ENCODE measurements at regions of chr16 and their contacts with region 1.

Region 1: DNA sequence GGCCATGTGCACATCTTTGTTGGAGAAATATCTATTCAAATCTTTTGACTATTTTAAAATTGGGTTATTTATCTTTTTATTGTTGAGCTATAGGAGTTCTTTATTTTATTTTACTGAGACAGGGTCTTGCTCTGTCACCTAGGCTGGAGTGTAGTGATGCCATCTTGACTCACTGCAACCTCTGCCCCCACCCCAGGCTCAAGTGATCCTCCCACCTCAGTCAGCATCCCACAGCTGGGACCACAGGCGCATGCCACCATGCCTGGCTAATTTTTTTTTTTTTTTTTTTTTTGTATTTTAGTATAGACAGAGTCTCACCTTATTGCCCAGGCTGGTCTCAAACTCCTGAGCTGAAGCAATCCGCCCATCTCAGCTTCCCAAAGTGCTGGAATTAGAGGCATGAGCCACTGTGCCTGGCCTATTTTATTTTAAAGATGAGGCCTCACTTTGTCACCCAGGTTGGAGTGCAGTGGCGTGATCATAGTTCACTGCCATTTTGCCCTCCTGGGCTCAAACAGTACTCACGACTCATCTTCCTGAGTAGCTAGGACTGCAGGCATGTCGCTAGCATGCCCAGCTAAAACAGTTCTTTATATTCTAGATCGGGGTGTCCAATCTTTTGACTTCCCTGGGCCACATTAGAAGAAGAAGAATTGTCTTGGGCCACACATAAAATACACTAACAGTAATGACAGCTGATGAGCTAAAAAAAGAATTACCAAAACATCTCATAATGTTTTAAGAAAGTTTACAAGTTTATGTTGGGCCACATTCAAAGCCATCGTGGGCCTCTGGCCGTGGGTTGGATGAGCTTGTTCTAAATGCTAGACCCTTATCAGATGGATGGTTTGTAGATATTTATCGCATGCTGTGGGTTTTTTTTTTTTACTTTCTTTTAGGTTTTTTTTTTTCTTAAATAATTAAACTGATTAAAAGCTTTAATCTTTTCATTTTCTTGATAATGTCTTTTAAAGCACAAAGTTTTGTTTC is 13.7 kb downstream of the TENT4B start:
- DNase-seq: no peak
- ATAC-seq: no peak
- H3K4me3 ChIP-seq: peak overlapping the region; percentile 15; the same call in 1 of the 2 replicates
- H3K27ac ChIP-seq: peak overlapping the region; percentile 9; the same call in 1 of the 2 replicates
- H3K4me1 ChIP-seq: peaks cover 6% of the 10 kb centered on the region; the same call in 1 of the 2 replicates
- H3K27me3 ChIP-seq: no peaks in the 10 kb centered on the region
- CTCF ChIP-seq: no peak
- EP300 ChIP-seq: no peak
- POLR2A ChIP-seq: no peak
- RAD21 ChIP-seq: no peak

Region 2: GRCh38 chr16:50195276-50195675 is 28.5 kb after region 1 on chr16:
- CTCF ChIA-PET with region 1: interaction called, 6 read pairs
- POLR2A ChIA-PET with region 1: interaction called, 10 read pairs
- RAD21 ChIA-PET with region 1: no interaction called
- SMC1A ChIA-PET with region 1: interaction called, 6 read pairs
- in situ Hi-C with region 1: no loop called
- intact Hi-C with region 1: no loop called
- DNase-seq: no peak
- ATAC-seq: peak; percentile 12
- H3K4me3 ChIP-seq: peak overlapping the region; percentile 43; the same call in 1 of the 2 replicates
- H3K27ac ChIP-seq: peak overlapping the region; percentile 75
- H3K4me1 ChIP-seq: peaks cover 42% of the 10 kb centered on the region
- H3K27me3 ChIP-seq: no peaks in the 10 kb centered on the region
- CTCF ChIP-seq: no peak
- EP300 ChIP-seq: no peak
- POLR2A ChIP-seq: no peak
- RAD21 ChIP-seq: no peak

Region 3: DNA sequence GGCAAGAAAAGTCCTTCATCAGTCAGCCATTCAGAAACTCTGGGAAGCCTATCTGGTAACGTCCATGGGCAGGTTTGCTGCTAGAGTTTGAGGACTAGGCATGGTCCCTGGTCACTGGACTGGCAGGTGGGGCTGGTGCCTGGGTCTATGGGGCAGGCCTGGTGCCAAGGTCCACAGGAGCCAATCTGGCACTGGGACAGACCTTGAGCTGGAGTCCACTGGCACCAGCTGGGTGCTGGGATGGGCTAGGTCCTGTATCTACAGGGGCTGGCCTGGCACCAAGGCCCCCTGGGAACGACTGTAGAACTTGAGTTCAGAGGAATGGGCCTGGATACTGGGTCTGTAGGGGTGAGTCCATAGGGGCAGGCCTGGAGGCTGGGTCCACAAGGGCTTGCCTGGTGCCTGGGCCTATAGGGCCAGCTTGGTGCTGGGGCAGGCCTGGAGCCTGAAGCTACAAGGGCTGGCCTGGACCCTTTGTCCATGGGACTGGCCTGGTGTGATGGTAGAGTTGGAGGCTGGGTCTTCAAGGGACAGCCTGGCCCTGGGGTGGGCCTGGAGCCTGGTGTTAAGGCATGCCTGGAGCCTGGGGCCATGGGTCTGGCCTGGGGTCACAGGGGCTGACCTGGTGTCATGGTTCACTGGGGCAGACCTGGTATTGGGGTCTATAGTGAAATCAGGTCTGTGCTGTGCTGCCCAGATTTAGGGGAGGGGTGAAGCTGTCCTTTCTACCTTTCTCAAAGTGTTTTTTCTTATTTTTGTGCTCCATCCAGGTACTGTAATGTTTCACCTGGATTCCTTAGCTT is 350.8 kb after region 1 on chr16:
- CTCF ChIA-PET with region 1: no interaction called
- POLR2A ChIA-PET with region 1: no interaction called
- RAD21 ChIA-PET with region 1: no interaction called
- SMC1A ChIA-PET with region 1: no interaction called
- in situ Hi-C with region 1: no loop called
- intact Hi-C with region 1: no loop called
- DNase-seq: no peak
- ATAC-seq: no peak
- H3K4me3 ChIP-seq: no peak overlapping the region
- H3K27ac ChIP-seq: no peak overlapping the region
- H3K4me1 ChIP-seq: no peaks in the 10 kb centered on the region
- H3K27me3 ChIP-seq: no peaks in the 10 kb centered on the region; a peak in 1 of 4 replicates
- CTCF ChIP-seq: no peak
- EP300 ChIP-seq: no peak
- POLR2A ChIP-seq: no peak
- RAD21 ChIP-seq: no peak